Mammary epithelial cell (primary cell): ENCODE measurements at regions of chr7 and their contacts with region 1.

Region 1: DNA sequence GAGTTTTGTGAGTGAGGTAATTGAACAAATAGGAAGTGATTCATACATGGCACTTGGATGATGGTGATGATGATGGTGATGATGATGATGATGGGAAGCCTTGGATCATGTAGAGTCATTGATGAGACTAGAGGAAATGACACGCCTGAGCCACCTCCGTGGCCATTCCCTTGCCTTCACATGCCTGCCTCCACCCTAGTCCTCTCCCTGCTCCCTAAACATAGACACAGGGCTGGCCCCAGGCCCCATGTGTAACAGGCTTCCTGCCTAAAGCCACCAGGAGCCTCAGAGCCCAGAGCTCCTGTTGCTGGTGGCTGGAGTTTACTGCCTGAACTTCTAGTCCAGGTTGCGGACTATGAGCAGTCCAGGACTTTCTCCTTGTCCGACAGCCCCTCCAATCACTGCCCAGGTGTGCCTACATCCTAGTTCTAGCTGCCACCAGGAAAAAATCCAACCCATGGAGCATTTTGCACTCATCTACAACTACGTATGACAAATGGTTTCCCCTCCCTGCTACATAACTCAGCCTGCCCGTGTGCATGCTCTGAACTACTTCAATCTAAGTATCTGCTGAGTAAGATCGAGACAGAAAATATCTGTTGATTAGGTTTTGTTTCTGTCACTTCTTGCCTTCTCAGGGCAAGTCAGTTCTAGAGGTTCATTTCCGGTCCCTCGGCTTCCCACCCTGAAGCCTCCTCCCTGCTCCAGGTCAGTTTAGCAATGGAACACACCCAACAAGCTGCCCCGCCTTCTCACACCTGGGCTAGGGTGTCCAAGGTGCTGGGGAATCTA is 35.5 kb upstream of the KDM7A start:
- DNase-seq: peak; percentile 74
- H3K4me3 ChIP-seq: no peak overlapping the region
- H3K27ac ChIP-seq: peak overlapping the region; percentile 4
- H3K4me1 ChIP-seq: peaks cover 27% of the 10 kb centered on the region
- H3K27me3 ChIP-seq: no peaks in the 10 kb centered on the region
- CTCF ChIP-seq: no peak

Region 2: DNA sequence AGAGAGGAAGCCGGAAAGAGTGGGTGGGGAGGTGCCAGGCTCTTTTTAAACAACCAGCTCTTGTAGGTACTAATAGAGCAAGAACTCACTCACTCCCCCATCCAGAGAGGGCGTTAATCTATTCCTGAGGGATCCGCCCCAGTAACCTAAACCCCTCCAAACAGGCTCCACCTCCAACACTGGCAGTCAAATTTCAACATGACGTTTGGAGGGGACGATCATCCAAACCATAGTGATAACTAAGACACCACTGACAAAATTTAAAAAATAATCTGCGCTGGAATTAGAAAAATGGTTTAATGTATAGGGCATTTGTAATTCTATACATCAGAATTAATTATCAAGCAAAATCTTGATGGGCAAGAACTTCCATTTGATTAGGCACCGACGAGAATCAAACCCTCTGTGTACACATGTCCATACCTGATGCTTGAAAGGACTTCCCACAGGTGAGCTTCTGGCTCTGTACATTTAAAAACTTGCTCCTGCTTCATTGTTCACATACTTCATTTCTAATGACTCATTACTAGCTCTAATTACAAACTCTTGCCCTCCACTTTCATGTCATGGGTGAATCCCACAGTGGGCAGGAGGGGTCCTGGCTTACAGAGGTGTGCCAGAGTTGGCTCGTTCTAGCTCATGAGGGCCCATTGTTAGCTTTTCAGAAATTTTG is 14.9 kb before region 1 on chr7:
- CTCF ChIA-PET with region 1: interaction called, 26 read pairs
- dilution Hi-C with region 1: no loop called
- in situ Hi-C with region 1: no loop called
- intact Hi-C with region 1: no loop called
- DNase-seq: no peak
- H3K4me3 ChIP-seq: no peak overlapping the region
- H3K27ac ChIP-seq: no peak overlapping the region
- H3K4me1 ChIP-seq: peaks cover 18% of the 10 kb centered on the region
- H3K27me3 ChIP-seq: no peaks in the 10 kb centered on the region
- CTCF ChIP-seq: no peak